ENCODE measurements at regions of chr1 and their contacts with region 1.

Region 1: DNA sequence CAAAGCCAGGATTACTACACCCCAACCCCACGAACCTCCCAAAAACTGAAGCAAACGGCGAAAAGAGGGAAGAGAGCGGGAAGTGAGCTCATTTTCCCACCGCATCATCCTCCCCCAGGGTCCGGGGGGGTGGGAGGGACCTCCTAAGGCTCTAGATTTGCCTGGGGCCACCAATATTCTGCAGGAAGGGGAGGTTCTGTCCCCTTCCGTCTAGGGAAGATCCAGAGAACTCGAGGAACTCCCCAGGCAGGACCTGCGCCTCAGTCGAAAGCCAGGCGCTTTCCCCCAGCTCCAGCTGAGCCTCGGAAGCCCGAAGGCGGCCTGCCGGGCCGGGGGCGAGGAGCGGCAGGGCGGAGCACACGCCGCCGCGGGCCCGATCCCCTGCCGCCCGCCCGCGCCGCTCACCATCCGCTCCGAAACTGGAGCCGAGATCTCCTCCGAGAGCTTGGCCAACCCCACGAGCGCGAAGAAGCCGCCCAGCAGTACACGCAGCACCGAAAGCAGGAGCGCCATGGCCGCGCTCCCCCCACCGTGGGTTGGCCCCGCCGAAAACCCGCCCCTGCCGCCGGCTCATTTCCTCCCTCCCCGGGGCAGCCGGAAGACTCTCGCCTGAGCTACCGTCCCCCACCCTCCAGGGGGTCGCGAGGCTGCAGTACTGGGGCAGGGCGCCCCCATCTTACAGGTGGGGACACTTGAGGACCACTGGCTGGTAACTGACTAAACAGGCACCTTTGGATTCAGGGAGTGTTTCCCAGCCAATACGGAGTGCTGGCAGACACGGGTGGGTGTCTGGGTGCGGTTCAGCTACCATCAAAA is at the start of gene TMEM35B:
- DNase-seq: peak; percentile 44
- H3K4me3 Mint-ChIP-seq: peak within 1 kb of the TSS; percentile 90
- H3K27ac Mint-ChIP-seq: peak within 1 kb of the TSS; percentile 73
- H3K4me1 Mint-ChIP-seq: peaks cover 11% of the 10 kb centered on the region
- H3K27me3 Mint-ChIP-seq: no peaks in the 10 kb centered on the region
- CTCF ChIP-seq: no peak
- total RNA-seq, gene TMEM35B: 18.7 and 21.9 TPM in 2 replicates

Region 2: DNA sequence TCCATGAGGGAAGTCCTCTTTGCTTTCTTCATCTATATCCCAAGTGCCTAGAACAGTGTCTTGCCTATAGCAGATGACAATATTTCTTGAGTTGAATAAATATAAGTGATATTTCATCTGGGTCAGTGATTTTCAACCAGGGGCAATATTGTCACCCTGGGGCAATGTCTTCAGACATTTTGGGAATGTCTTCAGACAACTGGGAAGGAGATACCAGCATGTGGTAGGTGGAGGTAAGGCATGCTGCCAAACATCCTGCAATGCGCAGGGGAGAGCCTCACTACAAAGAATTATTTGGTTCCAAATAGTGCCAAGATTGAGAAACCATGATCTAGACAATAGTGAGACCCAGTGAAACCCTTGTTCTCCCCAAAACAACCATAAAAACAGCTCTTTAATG is 753.6 kb before region 1 on chr1:
- CTCF ChIA-PET with region 1: no interaction called
- POLR2A ChIA-PET with region 1: no interaction called
- intact Hi-C with region 1: no loop called
- DNase-seq: no peak
- H3K4me3 Mint-ChIP-seq: no peak overlapping the region
- H3K27ac Mint-ChIP-seq: no peak overlapping the region
- H3K4me1 Mint-ChIP-seq: no peaks in the 10 kb centered on the region
- H3K27me3 Mint-ChIP-seq: no peaks in the 10 kb centered on the region
- CTCF ChIP-seq: no peak

Region 3: GRCh38 chr1:34859446-34860200 is 125.4 kb before region 1 on chr1 and contains the start of gene SMIM12:
- CTCF ChIA-PET with region 1: interaction called, 4 read pairs
- POLR2A ChIA-PET with region 1: interaction called, 14 read pairs
- intact Hi-C with region 1: no loop called
- DNase-seq: peak; percentile 95
- H3K4me3 Mint-ChIP-seq: peak within 1 kb of the TSS; percentile 93
- H3K27ac Mint-ChIP-seq: peak within 1 kb of the TSS; percentile 79
- H3K4me1 Mint-ChIP-seq: peaks cover 16% of the 10 kb centered on the region
- H3K27me3 Mint-ChIP-seq: peaks cover 9% of the 10 kb centered on the region
- CTCF ChIP-seq: peak; percentile 79
- total RNA-seq, gene SMIM12: 40.2 and 41.4 TPM in 2 replicates

Region 4: DNA sequence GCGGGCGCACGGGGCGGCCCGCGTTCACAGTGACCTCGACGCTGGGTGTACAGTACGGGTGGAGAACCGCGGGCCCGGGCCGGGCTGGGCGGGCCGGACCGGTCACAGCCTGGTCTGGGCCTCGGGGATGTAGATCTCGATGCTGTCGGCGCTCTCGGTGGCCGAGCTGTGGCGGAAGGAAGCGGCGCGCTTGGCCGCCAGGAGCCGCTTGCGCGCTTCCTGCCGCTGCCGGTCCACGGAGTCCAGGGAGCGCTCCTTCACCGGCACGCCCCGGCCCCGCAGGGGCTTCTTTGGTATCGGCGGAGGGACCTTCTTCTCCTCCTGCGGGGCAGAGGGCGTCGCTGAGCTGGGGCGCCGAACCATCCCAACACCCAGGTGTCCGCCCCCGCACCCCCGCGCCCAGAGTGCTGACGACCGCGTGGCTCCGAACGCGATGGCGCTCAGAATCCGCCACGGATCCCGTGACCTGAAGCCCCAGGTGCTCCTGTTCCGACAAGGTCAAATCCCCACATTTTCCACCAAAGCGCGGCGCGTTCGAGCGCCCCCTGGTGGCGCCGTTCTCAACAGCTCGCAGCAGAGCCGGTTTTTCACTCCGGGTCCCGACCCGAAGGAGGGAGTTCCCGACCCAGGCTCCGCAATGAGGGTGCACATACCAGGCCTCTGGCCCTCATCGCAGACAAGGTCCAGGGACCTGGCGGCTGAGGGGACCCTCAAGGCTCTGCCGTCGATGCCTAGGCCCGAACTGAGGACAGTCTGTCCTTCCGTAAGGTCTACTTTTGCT is 118.8 kb before region 1 on chr1:
- CTCF ChIA-PET with region 1: interaction called, 10 read pairs
- POLR2A ChIA-PET with region 1: no interaction called
- intact Hi-C with region 1: no loop called
- DNase-seq: peak; percentile 76
- H3K4me3 Mint-ChIP-seq: peak overlapping the region; percentile 73
- H3K27ac Mint-ChIP-seq: peak overlapping the region; percentile 51
- H3K4me1 Mint-ChIP-seq: no peaks in the 10 kb centered on the region
- H3K27me3 Mint-ChIP-seq: peaks cover 31% of the 10 kb centered on the region
- CTCF ChIP-seq: peak; percentile 94

Region 5: GRCh38 chr1:35001743-35002142 is 16.7 kb after region 1 on chr1:
- CTCF ChIA-PET with region 1: no interaction called
- POLR2A ChIA-PET with region 1: interaction called, 11 read pairs
- intact Hi-C with region 1: no loop called
- DNase-seq: no peak
- H3K4me3 Mint-ChIP-seq: no peak overlapping the region
- H3K27ac Mint-ChIP-seq: no peak overlapping the region
- H3K4me1 Mint-ChIP-seq: no peaks in the 10 kb centered on the region
- H3K27me3 Mint-ChIP-seq: no peaks in the 10 kb centered on the region
- CTCF ChIP-seq: no peak